ENCODE measurements at regions of chr21 and their contacts with region 1.

Region 1: GRCh38 chr21:42440187-42440792 is 36.6 kb downstream of the UBASH3A start:
- H3K4me3 Mint-ChIP-seq: no peak overlapping the region
- H3K27ac Mint-ChIP-seq: no peak overlapping the region
- H3K4me1 Mint-ChIP-seq: peaks cover 10% of the 10 kb centered on the region
- H3K27me3 Mint-ChIP-seq: peaks cover 8% of the 10 kb centered on the region

Region 2: DNA sequence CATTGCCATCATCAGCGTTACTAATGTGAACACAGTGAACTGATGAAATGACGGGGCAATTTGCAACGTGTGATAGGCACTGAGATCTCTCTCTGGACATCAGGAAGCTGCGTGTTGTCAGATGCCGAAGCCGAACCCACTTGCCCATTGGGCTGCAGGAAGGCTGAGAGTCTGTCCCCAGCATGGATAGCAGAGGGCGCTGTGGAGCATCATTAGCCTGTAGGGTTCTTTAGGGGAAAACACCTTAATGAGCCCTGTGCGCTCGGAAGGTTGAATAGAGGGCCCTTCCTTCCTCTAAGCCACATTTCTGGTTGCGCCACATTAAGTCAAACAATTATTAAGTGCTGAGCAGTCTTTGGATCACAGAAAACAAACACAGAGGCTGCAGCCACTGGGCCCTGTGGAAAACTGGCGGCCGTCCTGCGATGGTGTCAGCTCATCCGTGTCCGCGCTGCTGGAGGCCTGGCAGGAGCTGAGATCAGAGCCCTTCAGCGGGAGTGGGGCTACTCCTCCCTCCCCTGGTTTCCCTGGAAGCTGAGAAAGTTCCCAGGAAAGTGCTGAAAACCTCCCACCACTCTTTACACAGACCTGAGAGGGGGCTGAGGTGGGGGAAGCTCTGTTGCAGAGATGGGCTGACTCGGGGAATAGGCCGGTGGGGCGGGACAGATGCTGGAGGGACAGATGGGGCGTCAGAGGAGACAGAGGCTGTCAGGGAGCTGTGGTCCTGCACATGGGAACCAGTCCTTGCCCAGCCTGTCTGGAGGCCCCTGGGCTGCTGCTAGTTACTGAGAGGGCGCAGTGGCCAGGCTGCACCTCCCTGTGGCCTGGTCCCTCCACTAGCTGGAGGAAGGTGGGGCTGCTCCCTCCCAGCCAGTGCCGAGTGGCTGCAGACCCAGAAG is 102.2 kb before region 1 on chr21:
- intact Hi-C with region 1: loop called (anchors 10 kb)
- H3K4me3 Mint-ChIP-seq: no peak overlapping the region
- H3K27ac Mint-ChIP-seq: no peak overlapping the region
- H3K4me1 Mint-ChIP-seq: peaks cover 5% of the 10 kb centered on the region
- H3K27me3 Mint-ChIP-seq: peaks cover 15% of the 10 kb centered on the region